Activated CD4-positive, alpha-beta T cell treated with anti-CD3 and anti-CD28 coated beads for 36 hours (primary cell): ENCODE measurements at regions of chr3 and their contacts with region 1.

Region 1: DNA sequence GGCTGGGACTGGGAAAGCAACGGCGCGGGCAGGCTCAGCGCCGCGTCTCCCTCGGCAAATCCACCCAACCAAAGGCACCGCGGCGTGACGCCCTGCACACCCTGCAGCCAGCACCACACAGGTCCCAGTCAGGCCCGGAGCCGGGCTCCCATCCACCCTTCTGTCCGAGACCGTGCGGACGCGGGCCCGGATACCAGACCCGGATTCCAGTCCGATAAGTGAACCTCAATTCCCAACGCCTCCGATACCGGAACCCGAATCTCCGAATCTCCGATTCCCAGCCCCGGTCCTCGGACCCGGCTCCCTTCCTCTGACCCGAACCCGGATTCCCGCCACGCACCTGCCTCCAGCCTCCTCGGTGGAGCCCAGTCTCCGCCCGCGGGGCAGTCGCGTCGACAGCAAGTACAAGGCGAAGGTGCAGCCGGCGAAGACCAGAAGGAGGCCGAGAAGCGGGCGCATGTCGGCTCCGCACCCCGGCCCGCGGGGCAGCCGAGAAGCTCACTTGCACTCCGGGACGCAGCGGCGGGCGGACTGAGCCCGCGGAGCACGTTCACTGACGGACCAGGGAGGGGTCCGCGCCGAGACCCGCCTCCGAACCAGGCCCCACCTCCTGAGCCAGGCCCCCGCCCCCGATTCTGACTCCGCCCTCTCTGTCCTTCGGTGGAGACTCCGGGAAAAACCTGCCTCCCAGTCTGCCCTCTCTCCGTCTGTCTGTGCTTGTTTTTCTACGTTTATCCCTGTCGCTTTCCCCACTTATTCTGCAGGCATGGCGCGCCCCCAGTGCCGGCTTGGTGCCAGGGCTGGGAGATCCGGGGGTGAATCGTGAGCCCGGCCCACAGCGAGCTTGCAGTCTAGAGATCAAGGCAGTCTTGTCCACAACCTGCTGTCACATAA is at the start of gene TMEM41A:
- DNase-seq: peak; percentile 96
- ATAC-seq: peak; percentile 99
- H3K4me3 Mint-ChIP-seq: peak within 1 kb of the TSS; percentile 98
- H3K27ac Mint-ChIP-seq: peak within 1 kb of the TSS; percentile 91
- H3K4me1 Mint-ChIP-seq: peaks cover 18% of the 10 kb centered on the region
- H3K27me3 Mint-ChIP-seq: no peaks in the 10 kb centered on the region
- total RNA-seq, gene TMEM41A: 19.6 to 21.6 TPM

Region 2: GRCh38 chr3:185282696-185283394 is 215.9 kb before region 1 on chr3:
- CTCF ChIA-PET with region 1: no interaction called
- POLR2A ChIA-PET with region 1: no interaction called
- intact Hi-C with region 1: loop called (anchors 1 to 2 kb)
- DNase-seq: peak; percentile 98
- ATAC-seq: peak; percentile 100
- H3K4me3 Mint-ChIP-seq: peak overlapping the region; percentile 97
- H3K27ac Mint-ChIP-seq: peak overlapping the region; percentile 92
- H3K4me1 Mint-ChIP-seq: peaks cover 19% of the 10 kb centered on the region
- H3K27me3 Mint-ChIP-seq: peaks cover 7% of the 10 kb centered on the region

Region 3: GRCh38 chr3:185353823-185354614 is 144.7 kb before region 1 on chr3:
- CTCF ChIA-PET with region 1: no interaction called
- POLR2A ChIA-PET with region 1: no interaction called
- intact Hi-C with region 1: loop called in 1 of 2 experiments (anchors 2 kb)
- DNase-seq: peak; percentile 89
- ATAC-seq: peak; percentile 100
- H3K4me3 Mint-ChIP-seq: no peak overlapping the region
- H3K27ac Mint-ChIP-seq: no peak overlapping the region
- H3K4me1 Mint-ChIP-seq: no peaks in the 10 kb centered on the region
- H3K27me3 Mint-ChIP-seq: peaks cover 12% of the 10 kb centered on the region

Region 4: DNA sequence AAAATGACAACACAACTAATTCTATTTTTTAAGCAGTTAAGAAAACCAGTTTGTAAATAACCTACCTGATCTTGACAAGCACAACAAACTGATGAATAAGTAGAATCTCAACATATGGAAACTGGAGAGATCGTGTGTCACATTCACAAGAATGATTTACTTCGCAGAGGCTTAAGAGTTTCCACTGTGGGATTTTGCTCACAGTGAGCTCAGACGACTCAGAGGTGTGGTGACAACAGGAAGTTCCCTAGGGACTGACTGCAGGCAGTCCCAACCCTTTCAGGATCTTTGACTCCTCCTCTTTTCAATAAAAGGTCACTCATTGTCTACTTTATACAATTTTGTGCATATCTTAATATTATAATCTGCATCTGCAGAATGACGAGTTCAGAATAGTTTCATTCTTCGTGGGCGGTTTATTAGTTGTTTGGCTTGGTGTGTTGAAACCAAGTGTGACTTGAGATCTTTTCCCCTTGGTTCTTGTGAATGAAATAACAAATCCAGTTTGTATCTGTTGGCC is 53.7 kb after region 1 on chr3 and contains the start of gene LIPH:
- CTCF ChIA-PET with region 1: interaction called, 3 read pairs
- POLR2A ChIA-PET with region 1: interaction called, 3 read pairs
- intact Hi-C with region 1: loop called (anchors 1 to 2 kb)
- DNase-seq: peak; percentile 44
- ATAC-seq: peak; percentile 94
- H3K4me3 Mint-ChIP-seq: no peak within 1 kb of the TSS
- H3K27ac Mint-ChIP-seq: no peak within 1 kb of the TSS
- H3K4me1 Mint-ChIP-seq: peaks cover 13% of the 10 kb centered on the region
- H3K27me3 Mint-ChIP-seq: no peaks in the 10 kb centered on the region
- total RNA-seq, gene LIPH: not detected

Region 5: DNA sequence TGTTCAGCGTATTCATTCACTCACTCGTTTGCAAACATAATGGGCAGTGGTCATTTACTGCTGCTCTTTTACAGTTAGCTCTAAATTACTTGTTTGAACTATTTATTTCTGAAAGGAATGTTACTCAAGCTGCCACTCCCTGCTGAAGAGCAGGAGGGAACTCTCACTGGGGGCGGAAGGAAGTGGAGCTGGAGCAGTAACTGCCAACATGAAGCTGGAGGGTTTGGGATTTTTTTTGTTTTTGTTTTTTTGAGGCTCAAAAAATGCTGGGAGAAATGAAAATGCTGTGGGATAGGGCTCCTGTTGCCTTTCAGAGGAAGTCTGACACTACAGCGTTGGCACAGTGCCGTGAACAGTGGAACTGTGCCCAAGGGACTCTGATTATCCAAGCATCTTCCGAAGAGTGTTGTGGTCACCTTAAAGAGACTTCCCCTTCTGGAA is 131.5 kb after region 1 on chr3:
- CTCF ChIA-PET with region 1: no interaction called
- POLR2A ChIA-PET with region 1: no interaction called
- intact Hi-C with region 1: no loop called
- DNase-seq: no peak
- ATAC-seq: no peak
- H3K4me3 Mint-ChIP-seq: no peak overlapping the region
- H3K27ac Mint-ChIP-seq: no peak overlapping the region
- H3K4me1 Mint-ChIP-seq: peaks cover 8% of the 10 kb centered on the region
- H3K27me3 Mint-ChIP-seq: no peaks in the 10 kb centered on the region